Endothelial cell of umbilical vein (primary cell): ENCODE measurements at regions of chr13 and their contacts with region 1.

Region 1: GRCh38 chr13:101115762-101116171 is 300.5 kb downstream of the NALCN start:
- DNase-seq: no peak
- H3K4me3 ChIP-seq: no peak overlapping the region
- H3K27ac ChIP-seq: no peak overlapping the region
- H3K4me1 ChIP-seq: no peaks in the 10 kb centered on the region
- H3K27me3 ChIP-seq: no peaks in the 10 kb centered on the region
- CTCF ChIP-seq: no peak
- POLR2A ChIP-seq: no peak

Region 2: GRCh38 chr13:100269837-100270236 is 845.9 kb before region 1 on chr13:
- CTCF ChIA-PET with region 1: no interaction called
- POLR2A ChIA-PET with region 1: no interaction called
- dilution Hi-C with region 1: no loop called
- intact Hi-C with region 1: no loop called
- DNase-seq: peak; percentile 93
- H3K4me3 ChIP-seq: no peak overlapping the region
- H3K27ac ChIP-seq: no peak overlapping the region
- H3K4me1 ChIP-seq: peaks cover 9% of the 10 kb centered on the region
- H3K27me3 ChIP-seq: no peaks in the 10 kb centered on the region
- CTCF ChIP-seq: no peak
- POLR2A ChIP-seq: no peak

Region 3: DNA sequence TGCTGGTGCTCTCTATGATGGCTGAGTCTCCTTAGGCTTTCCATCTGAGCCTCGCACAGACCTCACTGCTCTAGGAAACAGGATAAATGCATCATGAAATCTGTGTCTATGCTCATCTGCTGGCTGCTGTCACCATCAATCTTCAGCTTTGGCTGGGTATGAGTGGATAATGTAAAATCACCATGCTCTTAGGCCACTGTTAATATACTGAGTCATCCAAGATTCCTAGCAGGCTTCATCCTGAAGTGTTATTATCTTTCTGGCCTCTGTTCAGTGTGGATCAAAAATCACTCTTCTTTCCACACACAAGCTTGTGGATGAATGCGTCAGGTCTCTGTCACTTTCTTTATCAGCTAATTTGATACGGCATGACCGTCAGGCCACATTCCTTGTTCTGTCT is 16.9 kb before region 1 on chr13:
- CTCF ChIA-PET with region 1: interaction called, 10 read pairs
- POLR2A ChIA-PET with region 1: no interaction called
- dilution Hi-C with region 1: no loop called
- intact Hi-C with region 1: no loop called
- DNase-seq: no peak
- H3K4me3 ChIP-seq: no peak overlapping the region
- H3K27ac ChIP-seq: no peak overlapping the region
- H3K4me1 ChIP-seq: no peaks in the 10 kb centered on the region
- H3K27me3 ChIP-seq: no peaks in the 10 kb centered on the region
- CTCF ChIP-seq: no peak
- POLR2A ChIP-seq: no peak

Region 4: GRCh38 chr13:101127741-101128353 is 12.1 kb after region 1 on chr13:
- CTCF ChIA-PET with region 1: interaction called, 12 read pairs
- POLR2A ChIA-PET with region 1: no interaction called
- dilution Hi-C with region 1: no loop called
- intact Hi-C with region 1: no loop called
- DNase-seq: peak; percentile 66
- H3K4me3 ChIP-seq: no peak overlapping the region
- H3K27ac ChIP-seq: no peak overlapping the region
- H3K4me1 ChIP-seq: no peaks in the 10 kb centered on the region
- H3K27me3 ChIP-seq: no peaks in the 10 kb centered on the region
- CTCF ChIP-seq: peak; percentile 61 to 63
- POLR2A ChIP-seq: no peak